ENCODE measurements at regions of chr11 and their contacts with region 1.

Region 1: DNA sequence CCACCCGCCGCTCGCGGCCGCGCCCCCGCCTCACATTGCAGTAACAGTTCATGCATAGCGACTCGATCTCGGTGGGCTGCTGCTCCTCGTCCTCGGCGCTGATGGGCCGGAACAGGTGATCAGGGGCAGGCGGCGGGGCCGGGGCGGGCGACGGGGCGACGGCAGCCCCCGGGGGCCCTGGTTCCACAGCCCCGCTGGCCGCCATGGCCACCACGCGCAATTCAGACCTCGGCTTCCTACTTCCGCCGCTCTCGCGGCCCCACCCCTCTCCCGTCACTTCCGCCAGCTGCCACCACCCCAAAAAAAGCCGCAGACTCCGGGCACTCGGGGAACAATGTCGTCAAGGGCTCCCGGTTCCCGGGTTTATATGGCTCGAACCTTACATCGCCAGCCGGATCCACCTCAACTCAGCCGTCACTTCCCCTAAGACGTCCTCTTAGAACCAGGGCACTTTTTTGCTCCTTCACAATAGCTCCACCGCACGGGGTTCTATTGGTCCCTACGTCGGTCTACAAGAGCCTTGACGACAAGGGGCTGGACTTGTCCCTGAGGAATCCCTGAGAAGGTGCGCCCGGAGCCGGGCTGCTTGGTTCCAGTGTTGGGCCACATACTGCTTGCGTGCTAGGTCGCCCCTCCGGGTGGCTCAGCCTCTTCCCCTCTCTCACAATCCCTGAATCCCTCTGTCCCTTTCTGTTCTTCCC is at the start of gene ZPR1:
- DNase-seq: peak; percentile 79
- H3K4me3 ChIP-seq: peak within 1 kb of the TSS; percentile 76 to 92 (median 88)
- H3K27ac ChIP-seq: peak within 1 kb of the TSS; percentile 52
- H3K4me1 ChIP-seq: peaks cover 13% of the 10 kb centered on the region
- H3K27me3 ChIP-seq: no peaks in the 10 kb centered on the region
- CTCF ChIP-seq: no peak
- POLR2A ChIP-seq: peak; percentile 97
- total RNA-seq, gene ZPR1: 48.6 and 54.5 TPM in 2 replicates

Region 2: GRCh38 chr11:116821050-116821918 is 33.3 kb after region 1 on chr11:
- CTCF ChIA-PET with region 1: interaction called, 30 read pairs
- POLR2A ChIA-PET with region 1: no interaction called
- dilution Hi-C with region 1: no loop called
- intact Hi-C with region 1: no loop called
- DNase-seq: no peak
- H3K4me3 ChIP-seq: no peak overlapping the region
- H3K27ac ChIP-seq: no peak overlapping the region
- H3K4me1 ChIP-seq: no peaks in the 10 kb centered on the region
- H3K27me3 ChIP-seq: no peaks in the 10 kb centered on the region
- CTCF ChIP-seq: no peak
- POLR2A ChIP-seq: no peak

Region 3: GRCh38 chr11:116865696-116866095 is 77.8 kb after region 1 on chr11:
- CTCF ChIA-PET with region 1: interaction called, 4 read pairs
- POLR2A ChIA-PET with region 1: no interaction called
- dilution Hi-C with region 1: no loop called
- intact Hi-C with region 1: loop called (anchors 5 kb)
- DNase-seq: no peak
- H3K4me3 ChIP-seq: no peak overlapping the region
- H3K27ac ChIP-seq: no peak overlapping the region
- H3K4me1 ChIP-seq: peaks cover 10% of the 10 kb centered on the region
- H3K27me3 ChIP-seq: no peaks in the 10 kb centered on the region
- CTCF ChIP-seq: no peak
- POLR2A ChIP-seq: no peak

Region 4: GRCh38 chr11:117002639-117003299 is 214.8 kb after region 1 on chr11:
- CTCF ChIA-PET with region 1: no interaction called
- POLR2A ChIA-PET with region 1: no interaction called
- dilution Hi-C with region 1: no loop called
- intact Hi-C with region 1: no loop called
- DNase-seq: no peak
- H3K4me3 ChIP-seq: no peak overlapping the region
- H3K27ac ChIP-seq: no peak overlapping the region
- H3K4me1 ChIP-seq: no peaks in the 10 kb centered on the region
- H3K27me3 ChIP-seq: no peaks in the 10 kb centered on the region
- CTCF ChIP-seq: no peak
- POLR2A ChIP-seq: no peak

Region 5: GRCh38 chr11:117107701-117108590 is 320.0 kb after region 1 on chr11:
- CTCF ChIA-PET with region 1: interaction called, 210 read pairs
- POLR2A ChIA-PET with region 1: interaction called, 5 read pairs
- dilution Hi-C with region 1: no loop called
- intact Hi-C with region 1: loop called (anchors 1 kb)
- DNase-seq: no peak
- H3K4me3 ChIP-seq: no peak overlapping the region
- H3K27ac ChIP-seq: no peak overlapping the region
- H3K4me1 ChIP-seq: no peaks in the 10 kb centered on the region
- H3K27me3 ChIP-seq: no peaks in the 10 kb centered on the region
- CTCF ChIP-seq: no peak
- POLR2A ChIP-seq: no peak

Region 6: GRCh38 chr11:117166491-117166890 is 378.6 kb after region 1 on chr11:
- CTCF ChIA-PET with region 1: no interaction called
- POLR2A ChIA-PET with region 1: no interaction called
- dilution Hi-C with region 1: no loop called
- intact Hi-C with region 1: no loop called
- DNase-seq: no peak
- H3K4me3 ChIP-seq: no peak overlapping the region
- H3K27ac ChIP-seq: no peak overlapping the region
- H3K4me1 ChIP-seq: no peaks in the 10 kb centered on the region
- H3K27me3 ChIP-seq: no peaks in the 10 kb centered on the region
- CTCF ChIP-seq: no peak
- POLR2A ChIP-seq: no peak

Region 7: GRCh38 chr11:117226388-117227385 is 438.8 kb after region 1 on chr11:
- CTCF ChIA-PET with region 1: interaction called, 63 read pairs
- POLR2A ChIA-PET with region 1: no interaction called
- dilution Hi-C with region 1: no loop called
- intact Hi-C with region 1: loop called (anchors 1 kb)
- DNase-seq: peak; percentile 73
- H3K4me3 ChIP-seq: no peak overlapping the region
- H3K27ac ChIP-seq: no peak overlapping the region
- H3K4me1 ChIP-seq: peaks cover 10% of the 10 kb centered on the region
- H3K27me3 ChIP-seq: no peaks in the 10 kb centered on the region
- CTCF ChIP-seq: peak; percentile 65 to 76
- POLR2A ChIP-seq: no peak

Region 8: DNA sequence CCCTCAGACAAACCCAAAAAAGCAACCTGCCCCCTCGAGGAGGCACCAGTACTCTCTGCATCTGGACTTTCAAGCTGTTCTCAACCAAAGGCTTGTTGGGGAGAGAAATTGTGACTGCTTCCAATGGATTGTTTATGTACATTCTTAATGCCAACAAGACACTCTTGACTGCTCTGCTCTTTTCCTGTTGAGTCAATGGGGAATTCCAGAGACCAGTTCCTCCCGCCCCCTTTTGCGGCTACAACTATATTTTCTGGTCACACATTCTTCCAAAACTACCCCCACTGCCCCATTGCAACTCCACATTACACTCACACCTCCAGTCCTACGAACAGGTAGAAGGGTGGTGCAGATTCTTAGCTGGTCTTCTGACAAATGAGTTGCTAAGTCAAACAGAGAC is 822.1 kb after region 1 on chr11:
- CTCF ChIA-PET with region 1: no interaction called
- POLR2A ChIA-PET with region 1: no interaction called
- dilution Hi-C with region 1: no loop called
- intact Hi-C with region 1: no loop called
- DNase-seq: peak; percentile 17
- H3K4me3 ChIP-seq: no peak overlapping the region
- H3K27ac ChIP-seq: no peak overlapping the region
- H3K4me1 ChIP-seq: no peaks in the 10 kb centered on the region
- H3K27me3 ChIP-seq: no peaks in the 10 kb centered on the region
- CTCF ChIP-seq: no peak
- POLR2A ChIP-seq: no peak